ENCODE measurements at regions of chr4 and their contacts with region 1.

Region 1: DNA sequence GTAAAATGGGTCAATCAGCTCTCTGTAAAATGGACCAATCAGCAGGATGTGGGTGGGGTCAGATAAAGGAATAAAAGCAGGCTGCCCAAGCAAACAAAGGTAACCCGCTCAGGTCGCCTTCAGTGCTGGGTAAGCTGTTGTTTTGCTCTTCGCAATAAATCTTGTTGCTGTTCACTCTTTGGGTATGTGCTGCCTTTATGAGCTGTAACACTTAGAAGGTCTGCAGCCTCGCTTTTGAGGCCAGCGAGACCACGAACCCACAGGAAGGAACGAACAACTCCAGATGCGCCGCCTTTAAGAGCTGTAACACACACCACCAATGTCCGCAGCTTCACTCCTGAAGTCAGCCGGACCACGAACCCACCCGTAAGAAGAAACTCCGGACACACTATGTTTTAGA is 11.5 kb upstream of the CAMK2D start:
- DNase-seq: no peak
- ATAC-seq: no peak
- H3K4me3 ChIP-seq: no peak overlapping the region
- H3K27ac ChIP-seq: no peak overlapping the region
- H3K4me1 ChIP-seq: no peaks in the 10 kb centered on the region
- H3K27me3 ChIP-seq: no peaks in the 10 kb centered on the region
- CTCF ChIP-seq: no peak
- POLR2A ChIP-seq: no peak

Region 2: GRCh38 chr4:113919611-113920010 is 146.6 kb after region 1 on chr4:
- intact Hi-C with region 1: loop called in 1 of 10 experiments (anchors 10 kb)
- DNase-seq: no peak
- ATAC-seq: no peak
- H3K4me3 ChIP-seq: no peak overlapping the region
- H3K27ac ChIP-seq: no peak overlapping the region
- H3K4me1 ChIP-seq: peaks cover 0 to 11% (median 0%) of the 10 kb centered on the region in 12 donors
- H3K27me3 ChIP-seq: no peaks in the 10 kb centered on the region
- CTCF ChIP-seq: no peak
- POLR2A ChIP-seq: no peak